ENCODE measurements at regions of chr20 and their contacts with region 1.

Region 1: GRCh38 chr20:49245921-49246740 is 26.9 kb downstream of the DDX27 start:
- DNase-seq: no peak
- H3K4me3 ChIP-seq: no peak overlapping the region
- H3K27ac ChIP-seq: 0 out of 2 replicates have a peak overlapping the region, but pooled peaks have one; percentile 2
- H3K4me1 ChIP-seq: no peaks in the 10 kb centered on the region
- H3K27me3 ChIP-seq: no peaks in the 10 kb centered on the region
- CTCF ChIP-seq: peak; percentile 4 to 76 (median 64)
- EP300 ChIP-seq: no peak
- POLR2A ChIP-seq: peak; percentile 3 to 10; a peak in 1 of 3 replicates
- RAD21 ChIP-seq: peak; percentile 43 to 61

Region 2: GRCh38 chr20:49230561-49231193 is 15.5 kb before region 1 on chr20:
- CTCF ChIA-PET with region 1: interaction called, 27 read pairs
- POLR2A ChIA-PET with region 1: interaction called, 51 read pairs
- DNase-seq: no peak
- H3K4me3 ChIP-seq: no peak overlapping the region
- H3K27ac ChIP-seq: no peak overlapping the region
- H3K4me1 ChIP-seq: no peaks in the 10 kb centered on the region
- H3K27me3 ChIP-seq: no peaks in the 10 kb centered on the region
- CTCF ChIP-seq: no peak
- EP300 ChIP-seq: no peak
- POLR2A ChIP-seq: no peak
- RAD21 ChIP-seq: no peak

Region 3: GRCh38 chr20:49268600-49269365 is 22.7 kb after region 1 on chr20:
- CTCF ChIA-PET with region 1: interaction called, 10 read pairs
- POLR2A ChIA-PET with region 1: interaction called, 15 read pairs
- DNase-seq: no peak
- H3K4me3 ChIP-seq: no peak overlapping the region
- H3K27ac ChIP-seq: no peak overlapping the region
- H3K4me1 ChIP-seq: no peaks in the 10 kb centered on the region
- H3K27me3 ChIP-seq: no peaks in the 10 kb centered on the region
- CTCF ChIP-seq: no peak
- EP300 ChIP-seq: no peak
- POLR2A ChIP-seq: no peak
- RAD21 ChIP-seq: no peak

Region 4: DNA sequence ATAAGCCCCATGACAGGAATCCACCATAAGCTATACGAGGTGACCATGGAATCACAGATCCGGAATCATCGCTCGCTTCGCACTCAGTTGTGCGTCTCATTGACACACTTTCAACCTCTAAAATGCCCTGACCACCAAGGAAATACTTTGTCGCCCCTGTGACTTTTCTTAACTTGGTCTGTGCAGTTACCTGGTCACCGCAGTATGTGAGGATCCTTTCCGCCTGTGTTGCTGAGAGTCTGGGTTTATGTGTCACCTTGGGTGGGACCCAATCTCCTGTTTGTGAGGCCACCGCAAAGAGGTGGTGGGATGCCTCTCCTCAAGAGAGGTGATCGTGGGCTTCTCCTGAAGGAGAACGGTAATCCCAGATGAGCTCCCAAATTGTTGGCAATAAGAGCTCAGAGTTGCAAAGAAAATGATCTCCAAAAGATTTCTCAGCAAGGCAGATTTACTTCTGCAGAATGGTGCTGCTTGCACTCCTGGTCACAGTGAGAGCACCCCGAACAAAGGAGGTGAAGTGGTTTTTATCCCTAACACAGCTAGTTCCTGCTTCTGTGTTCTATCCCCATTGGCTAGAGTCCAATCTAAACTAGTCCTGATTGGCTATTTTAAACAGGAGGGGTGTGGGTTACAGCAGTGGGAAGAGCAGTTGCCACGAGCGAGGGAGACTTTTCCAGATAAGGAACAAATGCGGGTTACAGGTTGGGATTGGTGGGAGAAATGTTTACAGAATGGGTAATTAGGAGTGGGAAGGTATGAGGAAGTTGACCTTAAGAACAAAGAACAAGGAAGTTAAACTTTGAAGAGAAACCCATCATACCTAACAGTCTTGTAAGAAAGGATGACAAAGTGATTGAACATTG is 40.8 kb after region 1 on chr20:
- CTCF ChIA-PET with region 1: interaction called, 13 read pairs
- POLR2A ChIA-PET with region 1: interaction called, 54 read pairs
- DNase-seq: no peak
- H3K4me3 ChIP-seq: peak overlapping the region in 2 of 4 experiments; percentile 10 to 89; a peak in 4 of 8 replicates
- H3K27ac ChIP-seq: peak overlapping the region; percentile 34; the same call in 1 of the 2 replicates
- H3K4me1 ChIP-seq: peaks cover 2 to 15% (median 11%) of the 10 kb centered on the region in 4 experiments; a peak in 6 of 7 replicates
- H3K27me3 ChIP-seq: no peaks in the 10 kb centered on the region
- CTCF ChIP-seq: no peak
- EP300 ChIP-seq: no peak
- POLR2A ChIP-seq: peak in 1 of 2 experiments; percentile 36; a peak in 1 of 3 replicates
- RAD21 ChIP-seq: no peak

Measured in H1 (cell line).